ENCODE measurements at regions of chr3 and their contacts with region 1.

Region 1: DNA sequence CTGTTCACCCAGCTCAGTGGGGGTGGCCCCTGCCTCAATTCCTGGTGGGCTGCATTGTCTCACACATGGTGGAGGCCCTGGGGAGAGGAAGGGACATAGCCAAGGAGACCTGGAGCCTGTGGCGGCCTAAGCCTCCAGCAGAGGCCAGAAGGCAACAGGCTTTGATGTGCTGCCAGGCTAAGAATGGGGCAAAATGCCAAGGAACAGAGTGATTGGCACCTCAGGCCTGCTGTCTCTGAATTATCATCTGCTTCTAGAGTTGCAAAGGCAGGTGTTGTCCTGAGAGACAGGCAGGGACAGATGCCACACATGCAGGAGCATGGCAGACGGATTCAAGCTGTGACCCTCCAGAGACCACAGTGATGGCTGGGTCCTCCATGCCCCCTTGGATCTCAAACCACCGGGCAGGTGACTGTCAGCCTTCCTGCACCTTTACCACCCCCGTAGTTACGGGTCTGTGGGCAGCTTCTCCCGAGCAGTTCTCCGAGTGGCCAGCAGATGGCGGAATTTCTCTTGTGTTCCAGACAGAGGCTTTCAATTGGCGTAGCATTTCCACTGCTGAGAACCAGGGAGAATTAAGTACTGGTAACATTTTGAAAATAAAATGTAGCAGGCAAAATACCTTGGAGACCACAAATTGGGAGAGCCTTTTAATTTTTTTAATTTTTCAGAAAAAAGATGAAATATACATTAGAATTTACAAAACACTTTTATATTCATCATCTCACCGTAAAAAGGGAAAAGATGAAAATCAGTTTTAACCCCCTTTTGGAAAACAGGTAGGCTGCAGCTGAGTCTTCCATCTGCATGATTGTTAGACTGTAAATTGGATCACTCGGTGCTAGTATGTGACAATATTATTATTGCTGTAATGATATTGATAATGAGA is 525.5 kb upstream of the CFAP20DC start:
- DNase-seq: peak; percentile 68 to 92 (median 82)
- ATAC-seq: peak; percentile 86
- H3K4me3 ChIP-seq: no peak overlapping the region
- H3K4me3 Mint-ChIP-seq: peak overlapping the region in 1 of 10 donors; percentile 37
- H3K27ac ChIP-seq: no peak overlapping the region
- H3K27ac Mint-ChIP-seq: peak overlapping the region in 1 of 9 donors; percentile 65
- H3K4me1 ChIP-seq: peaks cover 0 to 3% of the 10 kb centered on the region in 2 donors
- H3K4me1 Mint-ChIP-seq: peaks cover 3 to 20% (median 11%) of the 10 kb centered on the region in 7 donors
- H3K27me3 ChIP-seq: no peaks in the 10 kb centered on the region
- H3K27me3 Mint-ChIP-seq: peaks cover 0 to 2% (median 0%) of the 10 kb centered on the region in 5 donors

Region 2: DNA sequence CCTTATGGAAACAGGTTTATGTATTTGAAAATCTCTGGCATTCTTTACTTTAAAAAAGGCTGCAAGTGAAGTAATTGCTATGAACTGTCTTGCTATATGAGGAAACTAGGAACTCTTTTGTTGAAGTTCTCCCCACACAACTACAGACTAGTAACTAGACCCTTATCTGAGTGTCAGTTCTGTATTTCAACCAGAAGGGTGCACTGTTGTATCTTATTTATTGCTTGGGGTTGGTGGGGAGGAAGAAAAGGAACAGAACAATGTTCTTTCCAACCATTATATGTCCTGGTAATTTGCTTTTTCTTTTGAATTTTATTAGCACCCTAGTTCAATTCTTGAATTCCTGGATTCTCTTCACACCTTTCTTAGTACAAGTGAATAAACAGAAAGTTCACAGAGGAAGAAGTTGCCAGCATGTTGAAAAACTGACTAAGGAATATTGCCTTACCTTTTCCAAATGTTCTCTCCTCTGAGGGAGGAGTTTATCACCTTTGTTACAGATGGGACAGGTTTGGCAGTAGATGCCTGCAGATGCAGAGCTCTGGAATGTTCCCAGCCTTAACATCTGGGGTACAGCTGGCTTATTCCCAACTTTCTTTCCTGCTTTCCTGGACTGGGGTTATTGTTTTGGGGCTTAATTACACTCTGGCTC is 363.1 kb before region 1 on chr3:
- CTCF ChIA-PET with region 1: no interaction called
- POLR2A ChIA-PET with region 1: no interaction called
- intact Hi-C with region 1: loop called (anchors 1 kb)
- DNase-seq: peak in 7 of 9 donors; percentile 11 to 60 (median 53)
- ATAC-seq: peak; percentile 83
- H3K4me3 ChIP-seq: no peak overlapping the region
- H3K4me3 Mint-ChIP-seq: no peak overlapping the region
- H3K27ac ChIP-seq: no peak overlapping the region
- H3K27ac Mint-ChIP-seq: no peak overlapping the region
- H3K4me1 ChIP-seq: no peaks in the 10 kb centered on the region
- H3K4me1 Mint-ChIP-seq: peaks cover 0 to 10% (median 5%) of the 10 kb centered on the region in 7 donors
- H3K27me3 ChIP-seq: no peaks in the 10 kb centered on the region
- H3K27me3 Mint-ChIP-seq: peaks cover 0 to 11% (median 8%) of the 10 kb centered on the region in 5 donors

Region 3: DNA sequence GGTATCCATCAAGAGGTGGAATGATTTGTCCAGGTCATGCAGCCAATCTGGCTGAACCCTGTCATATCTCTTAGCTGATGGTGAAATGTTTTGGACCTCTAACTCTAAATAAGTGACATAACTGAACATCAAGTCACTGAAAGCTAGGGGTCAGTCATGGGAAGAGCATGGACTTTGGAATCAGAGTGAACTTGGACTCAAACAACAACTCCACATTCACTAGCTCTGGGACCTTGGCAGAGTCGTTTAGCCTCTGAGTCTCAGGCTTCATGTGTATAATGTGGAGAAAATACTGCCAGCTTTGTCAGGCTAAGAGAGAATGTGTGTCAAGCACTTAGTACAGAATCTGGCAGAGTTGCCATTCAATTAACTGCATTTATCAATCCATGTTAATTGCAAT is 32.3 kb after region 1 on chr3:
- CTCF ChIA-PET with region 1: no interaction called
- POLR2A ChIA-PET with region 1: no interaction called
- intact Hi-C with region 1: no loop called
- DNase-seq: no peak
- ATAC-seq: no peak
- H3K4me3 ChIP-seq: no peak overlapping the region
- H3K4me3 Mint-ChIP-seq: no peak overlapping the region
- H3K27ac ChIP-seq: no peak overlapping the region
- H3K27ac Mint-ChIP-seq: no peak overlapping the region
- H3K4me1 ChIP-seq: no peaks in the 10 kb centered on the region
- H3K4me1 Mint-ChIP-seq: peaks cover 0 to 6% (median 0%) of the 10 kb centered on the region in 7 donors
- H3K27me3 ChIP-seq: no peaks in the 10 kb centered on the region
- H3K27me3 Mint-ChIP-seq: no peaks in the 10 kb centered on the region

Region 4: GRCh38 chr3:59675495-59675894 is 100.1 kb after region 1 on chr3:
- CTCF ChIA-PET with region 1: no interaction called
- POLR2A ChIA-PET with region 1: no interaction called
- intact Hi-C with region 1: no loop called
- DNase-seq: no peak
- ATAC-seq: no peak
- H3K4me3 ChIP-seq: no peak overlapping the region
- H3K4me3 Mint-ChIP-seq: no peak overlapping the region
- H3K27ac ChIP-seq: no peak overlapping the region
- H3K27ac Mint-ChIP-seq: no peak overlapping the region
- H3K4me1 ChIP-seq: no peaks in the 10 kb centered on the region
- H3K4me1 Mint-ChIP-seq: no peaks in the 10 kb centered on the region
- H3K27me3 ChIP-seq: no peaks in the 10 kb centered on the region
- H3K27me3 Mint-ChIP-seq: peaks cover 0 to 5% (median 0%) of the 10 kb centered on the region in 5 donors

Region 5: DNA sequence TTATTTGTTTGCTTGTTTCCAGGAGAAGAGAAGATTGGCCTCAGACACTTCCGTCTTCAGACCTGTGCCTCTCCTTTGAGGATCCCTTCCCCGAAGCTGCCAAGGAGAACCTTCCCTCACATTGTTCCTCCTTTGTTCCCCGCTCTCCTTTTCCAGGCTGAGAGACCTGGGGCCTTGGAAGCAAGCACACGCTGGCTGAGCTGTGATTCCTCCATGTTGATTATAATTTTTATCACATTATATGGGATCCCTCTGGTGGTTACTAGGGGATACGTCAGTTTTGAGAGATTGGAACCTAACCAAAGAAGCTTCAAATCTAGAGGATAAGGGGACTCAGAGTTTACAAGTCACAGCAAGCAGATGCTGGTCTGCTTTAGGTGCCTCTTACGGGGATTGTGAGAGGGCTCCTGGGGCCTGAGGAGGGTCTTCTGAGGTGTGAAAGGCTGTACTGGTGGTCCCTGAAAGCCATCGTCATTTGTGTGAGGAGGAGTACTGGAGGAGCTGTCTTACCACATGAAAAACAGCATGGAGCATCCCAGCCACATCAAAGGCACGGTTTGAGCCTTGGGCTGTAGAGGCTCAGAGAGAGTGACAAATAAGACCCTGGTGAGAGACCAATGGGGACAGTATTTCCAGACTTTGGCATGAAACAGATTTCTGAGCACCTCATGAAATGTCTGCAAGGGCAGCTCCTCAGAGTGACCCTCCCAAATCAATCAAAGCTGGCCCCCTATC is 234.5 kb after region 1 on chr3:
- CTCF ChIA-PET with region 1: no interaction called
- POLR2A ChIA-PET with region 1: no interaction called
- intact Hi-C with region 1: loop called in 1 of 2 experiments (anchors 1 kb)
- DNase-seq: peak in 2 of 9 donors; percentile 8 to 11
- ATAC-seq: no peak
- H3K4me3 ChIP-seq: no peak overlapping the region
- H3K4me3 Mint-ChIP-seq: peak overlapping the region in 1 of 10 donors; percentile 2
- H3K27ac ChIP-seq: no peak overlapping the region
- H3K27ac Mint-ChIP-seq: peak overlapping the region in 6 of 9 donors; percentile 25 to 84 (median 56)
- H3K4me1 ChIP-seq: no peaks in the 10 kb centered on the region
- H3K4me1 Mint-ChIP-seq: peaks cover 5 to 77% (median 42%) of the 10 kb centered on the region in 7 donors
- H3K27me3 ChIP-seq: no peaks in the 10 kb centered on the region
- H3K27me3 Mint-ChIP-seq: no peaks in the 10 kb centered on the region

Region 6: DNA sequence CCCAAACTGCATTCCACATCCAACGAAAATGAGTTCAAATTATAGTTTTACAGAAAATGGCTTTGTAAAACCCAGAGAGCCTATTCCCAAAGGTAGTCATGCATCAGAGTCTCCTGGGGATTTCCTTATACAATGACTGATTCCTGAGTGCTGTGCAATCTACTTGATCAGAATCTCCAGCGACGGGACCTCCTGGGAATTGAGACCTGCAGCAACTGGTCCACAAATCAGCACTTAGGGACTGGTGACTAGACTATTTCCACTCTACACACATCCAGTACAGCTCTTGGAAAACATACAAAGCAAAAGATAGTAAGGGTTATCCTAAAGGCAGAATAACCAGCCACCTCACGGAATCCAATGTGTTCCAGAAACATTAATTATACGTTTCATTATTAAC is 345.5 kb after region 1 on chr3:
- CTCF ChIA-PET with region 1: no interaction called
- POLR2A ChIA-PET with region 1: no interaction called
- intact Hi-C with region 1: no loop called
- DNase-seq: no peak
- ATAC-seq: no peak
- H3K4me3 ChIP-seq: no peak overlapping the region
- H3K4me3 Mint-ChIP-seq: peak overlapping the region in 4 of 10 donors; percentile 19 to 33 (median 25)
- H3K27ac ChIP-seq: no peak overlapping the region
- H3K27ac Mint-ChIP-seq: peak overlapping the region in 8 of 9 donors; percentile 7 to 84 (median 56)
- H3K4me1 ChIP-seq: peaks cover 0 to 51% of the 10 kb centered on the region in 2 donors
- H3K4me1 Mint-ChIP-seq: peaks cover 44 to 98% (median 91%) of the 10 kb centered on the region in 7 donors
- H3K27me3 ChIP-seq: no peaks in the 10 kb centered on the region
- H3K27me3 Mint-ChIP-seq: no peaks in the 10 kb centered on the region

Region 7: GRCh38 chr3:59992578-59992977 is 417.2 kb after region 1 on chr3:
- CTCF ChIA-PET with region 1: interaction called, 3 read pairs
- POLR2A ChIA-PET with region 1: no interaction called
- intact Hi-C with region 1: loop called (anchors 2 to 5 kb)
- DNase-seq: peak in 1 of 9 donors; percentile 25
- ATAC-seq: no peak
- H3K4me3 ChIP-seq: no peak overlapping the region
- H3K4me3 Mint-ChIP-seq: peak overlapping the region in 7 of 10 donors; percentile 43 to 66 (median 57)
- H3K27ac ChIP-seq: peak overlapping the region; percentile 34
- H3K27ac Mint-ChIP-seq: peak overlapping the region in 8 of 9 donors; percentile 67 to 89 (median 82)
- H3K4me1 ChIP-seq: peaks cover 0 to 88% of the 10 kb centered on the region in 2 donors
- H3K4me1 Mint-ChIP-seq: peaks cover 39 to 100% (median 99%) of the 10 kb centered on the region in 7 donors
- H3K27me3 ChIP-seq: no peaks in the 10 kb centered on the region
- H3K27me3 Mint-ChIP-seq: no peaks in the 10 kb centered on the region

Region 8: DNA sequence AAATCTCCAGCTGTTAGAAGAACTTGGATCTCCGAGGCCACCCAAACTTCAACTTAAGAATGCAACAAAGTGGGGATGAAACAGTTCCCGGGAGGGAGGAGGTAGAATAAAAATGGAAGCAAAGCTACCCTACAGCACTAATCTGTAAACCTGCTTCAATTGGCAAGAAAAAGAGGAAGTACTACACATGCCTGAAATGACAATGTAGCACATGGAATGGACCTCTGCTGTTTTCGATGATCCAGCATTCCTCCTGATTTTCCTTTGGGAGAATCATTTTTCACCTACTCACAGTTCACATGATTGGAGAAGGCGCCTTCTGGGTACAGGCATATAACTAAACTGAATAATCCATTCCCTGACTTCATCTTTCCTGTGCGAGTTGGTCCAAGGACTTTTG is 594.4 kb after region 1 on chr3:
- CTCF ChIA-PET with region 1: no interaction called
- POLR2A ChIA-PET with region 1: no interaction called
- intact Hi-C with region 1: loop called in 1 of 2 experiments (anchors 1 kb)
- DNase-seq: no peak
- ATAC-seq: no peak
- H3K4me3 ChIP-seq: no peak overlapping the region
- H3K4me3 Mint-ChIP-seq: no peak overlapping the region
- H3K27ac ChIP-seq: no peak overlapping the region
- H3K27ac Mint-ChIP-seq: peak overlapping the region in 2 of 9 donors; percentile 22 to 68
- H3K4me1 ChIP-seq: no peaks in the 10 kb centered on the region
- H3K4me1 Mint-ChIP-seq: peaks cover 0 to 10% (median 6%) of the 10 kb centered on the region in 7 donors
- H3K27me3 ChIP-seq: no peaks in the 10 kb centered on the region
- H3K27me3 Mint-ChIP-seq: no peaks in the 10 kb centered on the region

Region 9: GRCh38 chr3:60609446-60609845 is 1034.1 kb after region 1 on chr3:
- CTCF ChIA-PET with region 1: no interaction called
- POLR2A ChIA-PET with region 1: no interaction called
- intact Hi-C with region 1: loop called in 1 of 2 experiments (anchors 10 kb)
- DNase-seq: no peak
- ATAC-seq: no peak
- H3K4me3 ChIP-seq: no peak overlapping the region
- H3K4me3 Mint-ChIP-seq: no peak overlapping the region
- H3K27ac ChIP-seq: no peak overlapping the region
- H3K27ac Mint-ChIP-seq: no peak overlapping the region
- H3K4me1 ChIP-seq: no peaks in the 10 kb centered on the region
- H3K4me1 Mint-ChIP-seq: peaks cover 0 to 2% (median 0%) of the 10 kb centered on the region in 7 donors
- H3K27me3 ChIP-seq: no peaks in the 10 kb centered on the region
- H3K27me3 Mint-ChIP-seq: no peaks in the 10 kb centered on the region

Region 10: DNA sequence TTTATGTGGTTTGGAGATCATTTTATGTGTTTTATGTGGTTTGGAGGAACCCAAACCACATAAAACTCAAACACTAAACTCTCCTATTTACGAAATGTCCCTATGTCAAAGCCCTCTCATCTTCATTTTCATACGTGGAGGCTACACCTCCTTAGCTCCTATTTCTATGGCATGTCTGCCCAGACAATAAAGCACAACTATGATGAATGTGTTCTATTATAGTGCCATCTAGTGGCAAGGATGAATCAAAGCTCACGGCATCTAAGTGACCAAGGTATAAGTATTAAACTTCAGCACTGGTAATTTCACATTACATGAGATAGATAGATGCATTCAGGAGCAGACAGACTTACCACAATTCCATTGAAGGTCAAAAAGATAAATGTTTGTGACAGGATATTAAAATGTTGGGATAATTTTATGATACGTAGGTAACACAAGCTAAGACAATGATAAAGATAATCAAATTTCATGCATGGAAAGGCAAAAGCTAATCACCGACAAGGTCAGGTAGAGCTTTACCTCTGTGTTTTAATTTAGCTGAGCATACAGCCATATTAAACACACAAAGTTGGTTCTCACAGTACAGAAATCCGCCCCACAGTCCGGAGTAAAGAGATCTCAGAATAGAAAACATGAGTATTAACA is 1806.5 kb after region 1 on chr3:
- CTCF ChIA-PET with region 1: interaction called, 10 read pairs
- POLR2A ChIA-PET with region 1: interaction called, 3 read pairs
- intact Hi-C with region 1: loop called (anchors 1 kb)
- DNase-seq: peak in 6 of 9 donors; percentile 32 to 60 (median 44)
- ATAC-seq: peak; percentile 63
- H3K4me3 ChIP-seq: no peak overlapping the region
- H3K4me3 Mint-ChIP-seq: no peak overlapping the region
- H3K27ac ChIP-seq: no peak overlapping the region
- H3K27ac Mint-ChIP-seq: no peak overlapping the region
- H3K4me1 ChIP-seq: no peaks in the 10 kb centered on the region
- H3K4me1 Mint-ChIP-seq: peaks cover 3 to 6% (median 5%) of the 10 kb centered on the region in 7 donors
- H3K27me3 ChIP-seq: no peaks in the 10 kb centered on the region
- H3K27me3 Mint-ChIP-seq: peaks cover 14 to 47% (median 27%) of the 10 kb centered on the region in 5 donors